ENCODE measurements at regions of chr3 and their contacts with region 1.

Region 1: GRCh38 chr3:8987645-8988383 is 24.5 kb upstream of the RAD18 start:
- DNase-seq: peak; percentile 85
- ATAC-seq: peak; percentile 90
- H3K4me3 Mint-ChIP-seq: peak overlapping the region; percentile 54
- H3K27ac Mint-ChIP-seq: no peak overlapping the region
- H3K4me1 Mint-ChIP-seq: peaks cover 10% of the 10 kb centered on the region
- H3K27me3 Mint-ChIP-seq: no peaks in the 10 kb centered on the region
- CTCF ChIP-seq: peak; percentile 78

Region 2: DNA sequence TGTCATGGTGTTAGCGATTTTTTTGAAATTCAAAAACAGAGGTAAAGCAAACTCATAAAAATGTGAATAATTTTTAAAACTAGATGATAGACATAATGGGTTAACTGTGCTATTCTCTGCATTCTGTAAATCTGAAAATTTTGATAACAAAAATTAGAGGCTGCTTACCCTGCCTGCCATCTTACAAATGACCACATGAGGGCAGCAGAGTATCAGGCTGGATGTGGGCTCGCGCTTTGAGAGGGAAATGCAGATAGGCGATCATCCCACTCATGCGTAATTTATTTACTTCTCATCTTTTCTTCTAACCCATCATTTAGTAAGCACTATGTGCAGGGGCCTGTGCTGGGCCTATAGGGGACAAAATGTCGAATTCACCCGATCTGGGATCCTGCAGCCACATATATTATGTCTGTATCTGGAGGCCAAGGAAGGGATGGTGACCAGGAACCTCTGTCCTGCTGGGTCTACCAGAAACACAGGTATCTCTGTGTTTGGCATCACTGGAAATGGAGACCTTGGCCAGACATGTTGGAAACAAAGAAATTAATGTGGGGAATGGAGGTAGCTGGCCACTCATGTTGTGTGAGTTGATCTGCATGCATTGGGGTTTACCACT is 16.7 kb before region 1 on chr3:
- CTCF ChIA-PET with region 1: interaction called, 92 read pairs
- POLR2A ChIA-PET with region 1: no interaction called
- DNase-seq: peak; percentile 62
- ATAC-seq: peak; percentile 57; the same call in 1 of the 2 replicates
- H3K4me3 Mint-ChIP-seq: no peak overlapping the region; the same call in 1 of the 2 replicates
- H3K27ac Mint-ChIP-seq: no peak overlapping the region
- H3K4me1 Mint-ChIP-seq: peaks cover 5% of the 10 kb centered on the region; the same call in 1 of the 2 replicates
- H3K27me3 Mint-ChIP-seq: peaks cover 16% of the 10 kb centered on the region
- CTCF ChIP-seq: peak; percentile 90

Region 3: GRCh38 chr3:9020426-9020825 is 32.6 kb after region 1 on chr3:
- CTCF ChIA-PET with region 1: interaction called, 27 read pairs
- POLR2A ChIA-PET with region 1: no interaction called
- DNase-seq: no peak
- ATAC-seq: no peak
- H3K4me3 Mint-ChIP-seq: no peak overlapping the region
- H3K27ac Mint-ChIP-seq: no peak overlapping the region
- H3K4me1 Mint-ChIP-seq: peaks cover 16% of the 10 kb centered on the region
- H3K27me3 Mint-ChIP-seq: no peaks in the 10 kb centered on the region
- CTCF ChIP-seq: no peak

Region 4: GRCh38 chr3:9047452-9048346 is 59.9 kb after region 1 on chr3:
- CTCF ChIA-PET with region 1: interaction called, 18 read pairs
- POLR2A ChIA-PET with region 1: no interaction called
- DNase-seq: no peak
- ATAC-seq: peak; percentile 38; the same call in 1 of the 2 replicates
- H3K4me3 Mint-ChIP-seq: no peak overlapping the region
- H3K27ac Mint-ChIP-seq: no peak overlapping the region
- H3K4me1 Mint-ChIP-seq: no peaks in the 10 kb centered on the region
- H3K27me3 Mint-ChIP-seq: no peaks in the 10 kb centered on the region
- CTCF ChIP-seq: no peak

Region 5: DNA sequence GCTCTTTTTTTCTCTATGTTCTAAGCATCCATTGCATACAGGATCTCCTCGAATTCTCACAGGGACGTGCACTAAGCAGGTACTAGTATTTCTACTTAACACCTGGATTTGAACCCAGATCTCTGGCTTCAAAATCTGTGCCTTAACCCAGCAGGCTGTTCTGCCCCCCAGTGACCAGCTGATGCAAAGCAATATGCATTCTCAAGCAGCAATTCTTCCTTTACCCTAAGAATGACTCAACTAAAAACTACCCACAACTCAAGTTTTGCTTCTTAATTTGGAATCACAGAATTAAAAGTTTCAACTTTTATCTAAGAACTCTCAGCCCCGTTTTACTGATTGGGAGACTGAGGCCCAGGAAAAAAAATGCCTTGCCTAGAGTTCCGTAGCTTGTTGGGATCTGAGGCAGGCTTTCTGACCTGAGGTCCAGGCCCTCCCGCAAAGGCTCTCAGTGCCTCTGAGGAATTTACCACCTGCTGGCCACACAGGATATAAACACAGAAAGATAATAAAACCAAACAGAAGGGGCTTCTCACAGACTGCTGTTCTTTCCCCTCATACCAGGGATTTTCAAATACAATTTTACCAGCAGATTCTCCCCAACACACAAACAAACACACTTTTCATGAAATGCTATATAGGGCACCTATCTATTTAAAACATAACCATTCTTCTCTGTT is 90.9 kb after region 1 on chr3:
- CTCF ChIA-PET with region 1: interaction called, 12 read pairs
- POLR2A ChIA-PET with region 1: no interaction called
- DNase-seq: no peak
- ATAC-seq: peak; percentile 73
- H3K4me3 Mint-ChIP-seq: no peak overlapping the region
- H3K27ac Mint-ChIP-seq: peak overlapping the region; percentile 12; the same call in 1 of the 2 replicates
- H3K4me1 Mint-ChIP-seq: peaks cover 31% of the 10 kb centered on the region
- H3K27me3 Mint-ChIP-seq: no peaks in the 10 kb centered on the region; the same call in 1 of the 2 replicates
- CTCF ChIP-seq: no peak

Region 6: GRCh38 chr3:9111866-9112265 is 124.1 kb after region 1 on chr3:
- CTCF ChIA-PET with region 1: interaction called, 35 read pairs
- POLR2A ChIA-PET with region 1: no interaction called
- DNase-seq: no peak
- ATAC-seq: peak; percentile 23
- H3K4me3 Mint-ChIP-seq: no peak overlapping the region
- H3K27ac Mint-ChIP-seq: no peak overlapping the region
- H3K4me1 Mint-ChIP-seq: peaks cover 7% of the 10 kb centered on the region
- H3K27me3 Mint-ChIP-seq: no peaks in the 10 kb centered on the region
- CTCF ChIP-seq: no peak

Measured in WTC11 (cell line).